Activated T-helper 1 cell treated with anti-CD3 and anti-CD28 coated beads, Interleukin-12 subunit alpha, Interleukin-12 subunit beta, Interleukin-2, Interleukin-4 antibody, amounts not matched to agents 30 ng/mL and 10 ng/mL and 1 ng/mL, durations not matched to agents 14 hours and 24 hours and 36 hours (primary cell): ENCODE measurements at regions of chr11 and their contacts with region 1.

Region 1: DNA sequence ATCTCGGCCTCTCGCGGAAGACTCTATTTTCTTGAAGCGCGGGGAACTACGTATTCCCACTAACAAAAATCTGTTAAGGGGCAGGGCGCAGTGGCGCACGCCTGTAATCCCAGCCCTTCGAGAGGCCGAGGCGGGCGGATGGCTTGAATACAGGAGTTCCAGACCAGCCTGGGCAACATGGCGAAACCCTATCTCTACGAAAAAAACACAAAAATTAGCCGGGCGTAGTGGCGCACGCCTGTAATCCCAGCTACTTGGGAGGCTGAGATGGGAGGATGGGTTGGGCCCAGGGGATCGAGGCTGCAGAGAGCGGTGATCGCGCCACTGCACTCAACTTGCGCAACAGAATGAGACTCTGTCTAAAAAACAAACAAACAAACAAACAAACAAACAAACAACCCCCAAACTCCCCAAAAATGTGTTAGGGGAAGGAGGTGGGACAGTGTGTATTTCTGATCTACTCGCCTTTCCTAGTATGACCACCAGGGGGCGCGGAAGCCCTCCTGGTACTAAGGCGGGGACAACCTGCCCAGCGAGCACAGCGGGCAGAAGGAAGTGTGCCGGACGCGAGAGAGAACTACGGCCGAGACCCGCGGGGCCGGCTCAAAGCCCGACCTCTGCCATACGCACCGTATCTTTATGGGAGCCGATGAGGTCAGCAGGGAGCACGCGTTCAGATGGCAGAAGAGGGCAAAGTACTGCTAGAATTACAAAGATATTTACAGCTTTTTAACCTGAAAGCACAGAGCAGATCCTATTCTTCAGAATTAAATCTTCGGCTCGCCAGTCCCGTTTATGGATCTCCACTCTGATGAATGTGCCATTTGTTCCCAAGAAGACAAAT is 1.3 kb upstream of the STX3 start:
- DNase-seq: peak; percentile 77
- H3K4me3 Mint-ChIP-seq: peak overlapping the region; percentile 95
- H3K27ac Mint-ChIP-seq: peak overlapping the region; percentile 82
- H3K4me1 Mint-ChIP-seq: peaks cover 36% of the 10 kb centered on the region
- H3K27me3 Mint-ChIP-seq: peaks cover 7% of the 10 kb centered on the region

Region 2: GRCh38 chr11:59615637-59616395 is 138.1 kb before region 1 on chr11 and contains the start of gene OSBP:
- intact Hi-C with region 1: loop called (anchors 1 kb)
- DNase-seq: peak; percentile 96
- H3K4me3 Mint-ChIP-seq: peak within 1 kb of the TSS; percentile 98
- H3K27ac Mint-ChIP-seq: peak within 1 kb of the TSS; percentile 96
- H3K4me1 Mint-ChIP-seq: peaks cover 37% of the 10 kb centered on the region
- H3K27me3 Mint-ChIP-seq: no peaks in the 10 kb centered on the region
- total RNA-seq, gene OSBP: 40.5 and 41.7 TPM in 2 replicates

Region 3: GRCh38 chr11:59767225-59767611 is 13.3 kb after region 1 on chr11:
- intact Hi-C with region 1: loop called (anchors 1 kb)
- DNase-seq: peak; percentile 26
- H3K4me3 Mint-ChIP-seq: peak overlapping the region; percentile 55
- H3K27ac Mint-ChIP-seq: peak overlapping the region; percentile 61
- H3K4me1 Mint-ChIP-seq: peaks cover 20% of the 10 kb centered on the region
- H3K27me3 Mint-ChIP-seq: no peaks in the 10 kb centered on the region

Region 4: GRCh38 chr11:59783632-59784090 is 29.8 kb after region 1 on chr11:
- intact Hi-C with region 1: loop called (anchors 1 kb)
- DNase-seq: no peak
- H3K4me3 Mint-ChIP-seq: no peak overlapping the region
- H3K27ac Mint-ChIP-seq: peak overlapping the region; percentile 54
- H3K4me1 Mint-ChIP-seq: peaks cover 58% of the 10 kb centered on the region
- H3K27me3 Mint-ChIP-seq: no peaks in the 10 kb centered on the region

Region 5: GRCh38 chr11:59810189-59810910 is 56.5 kb after region 1 on chr11 and contains the start of gene MRPL16:
- intact Hi-C with region 1: loop called (anchors 1 kb)
- DNase-seq: peak; percentile 82
- H3K4me3 Mint-ChIP-seq: peak within 1 kb of the TSS; percentile 96
- H3K27ac Mint-ChIP-seq: peak within 1 kb of the TSS; percentile 91
- H3K4me1 Mint-ChIP-seq: peaks cover 28% of the 10 kb centered on the region
- H3K27me3 Mint-ChIP-seq: no peaks in the 10 kb centered on the region
- total RNA-seq, gene MRPL16: 88.3 and 93.9 TPM in 2 replicates

Region 6: GRCh38 chr11:59918987-59919589 is 165.2 kb after region 1 on chr11:
- intact Hi-C with region 1: loop called (anchors 1 kb)
- DNase-seq: no peak
- H3K4me3 Mint-ChIP-seq: no peak overlapping the region
- H3K27ac Mint-ChIP-seq: no peak overlapping the region
- H3K4me1 Mint-ChIP-seq: no peaks in the 10 kb centered on the region
- H3K27me3 Mint-ChIP-seq: no peaks in the 10 kb centered on the region

Region 7: DNA sequence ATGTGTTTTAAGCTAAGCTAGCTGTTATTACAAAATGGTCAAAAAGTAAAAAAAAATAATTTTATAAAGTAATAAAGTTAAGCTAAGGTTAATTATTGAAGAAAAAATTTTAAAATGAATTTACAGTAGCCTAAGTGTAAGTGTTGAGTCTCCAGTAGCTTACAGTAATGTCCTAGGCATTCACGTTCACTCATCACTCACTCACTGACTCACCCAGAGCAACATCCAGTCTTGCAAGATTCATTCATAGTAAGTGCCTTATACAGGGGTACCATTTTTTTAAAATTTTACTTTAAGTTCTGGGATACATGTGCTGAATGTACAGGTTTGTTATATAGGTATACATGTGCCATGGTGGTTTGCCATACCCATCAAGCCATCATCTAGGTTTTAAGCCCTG is 251.5 kb after region 1 on chr11:
- intact Hi-C with region 1: no loop called
- DNase-seq: no peak
- H3K4me3 Mint-ChIP-seq: no peak overlapping the region
- H3K27ac Mint-ChIP-seq: no peak overlapping the region
- H3K4me1 Mint-ChIP-seq: no peaks in the 10 kb centered on the region
- H3K27me3 Mint-ChIP-seq: no peaks in the 10 kb centered on the region